ENCODE measurements at regions of chr10 and their contacts with region 1.

Region 1: DNA sequence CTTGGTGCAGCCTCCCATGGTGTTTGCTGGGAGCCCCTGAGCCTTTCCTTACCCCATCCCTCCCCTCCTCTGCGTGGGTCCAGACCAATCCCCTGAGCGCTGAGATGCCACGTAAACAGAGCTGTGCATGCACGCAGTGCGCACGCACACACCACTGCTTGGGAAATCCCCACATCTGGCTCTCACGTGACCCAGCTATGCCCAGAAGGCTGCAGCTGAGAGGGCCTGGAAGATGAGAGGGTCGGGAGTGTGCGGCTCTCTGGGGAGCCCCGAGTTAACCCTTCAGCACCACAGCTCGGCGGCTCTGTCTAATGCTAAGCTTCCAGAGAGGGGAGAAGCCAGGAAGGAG is 177.2 kb downstream of the SH3PXD2A start:
- DNase-seq: peak; percentile 93
- H3K4me3 ChIP-seq: peak overlapping the region; percentile 52
- H3K27me3 ChIP-seq: no peaks in the 10 kb centered on the region
- CTCF ChIP-seq: no peak

Region 2: GRCh38 chr10:103626178-103626577 is 52.0 kb before region 1 on chr10:
- CTCF ChIA-PET with region 1: no interaction called
- POLR2A ChIA-PET with region 1: no interaction called
- DNase-seq: no peak
- H3K4me3 ChIP-seq: no peak overlapping the region
- H3K27me3 ChIP-seq: no peaks in the 10 kb centered on the region
- CTCF ChIP-seq: no peak

Region 3: GRCh38 chr10:103666087-103666761 is 11.9 kb before region 1 on chr10:
- CTCF ChIA-PET with region 1: interaction called, 10 read pairs
- POLR2A ChIA-PET with region 1: no interaction called
- DNase-seq: no peak
- H3K4me3 ChIP-seq: no peak overlapping the region
- H3K27me3 ChIP-seq: no peaks in the 10 kb centered on the region
- CTCF ChIP-seq: peak; percentile 54